Caco-2 (cell line): ENCODE measurements at regions of chr6 and their contacts with region 1.

Region 1: GRCh38 chr6:36851149-36851614 is 11.9 kb upstream of the CPNE5 start:
- DNase-seq: peak in 1 of 2 experiments; percentile 61
- H3K4me3 ChIP-seq: no peak overlapping the region
- H3K4me3 Mint-ChIP-seq: no peak overlapping the region
- H3K27ac Mint-ChIP-seq: no peak overlapping the region
- H3K4me1 ChIP-seq: no peaks in the 10 kb centered on the region
- H3K4me1 Mint-ChIP-seq: peaks cover 8% of the 10 kb centered on the region
- H3K27me3 ChIP-seq: no peaks in the 10 kb centered on the region
- H3K27me3 Mint-ChIP-seq: no peaks in the 10 kb centered on the region
- CTCF ChIP-seq: peak; percentile 79 to 82

Region 2: DNA sequence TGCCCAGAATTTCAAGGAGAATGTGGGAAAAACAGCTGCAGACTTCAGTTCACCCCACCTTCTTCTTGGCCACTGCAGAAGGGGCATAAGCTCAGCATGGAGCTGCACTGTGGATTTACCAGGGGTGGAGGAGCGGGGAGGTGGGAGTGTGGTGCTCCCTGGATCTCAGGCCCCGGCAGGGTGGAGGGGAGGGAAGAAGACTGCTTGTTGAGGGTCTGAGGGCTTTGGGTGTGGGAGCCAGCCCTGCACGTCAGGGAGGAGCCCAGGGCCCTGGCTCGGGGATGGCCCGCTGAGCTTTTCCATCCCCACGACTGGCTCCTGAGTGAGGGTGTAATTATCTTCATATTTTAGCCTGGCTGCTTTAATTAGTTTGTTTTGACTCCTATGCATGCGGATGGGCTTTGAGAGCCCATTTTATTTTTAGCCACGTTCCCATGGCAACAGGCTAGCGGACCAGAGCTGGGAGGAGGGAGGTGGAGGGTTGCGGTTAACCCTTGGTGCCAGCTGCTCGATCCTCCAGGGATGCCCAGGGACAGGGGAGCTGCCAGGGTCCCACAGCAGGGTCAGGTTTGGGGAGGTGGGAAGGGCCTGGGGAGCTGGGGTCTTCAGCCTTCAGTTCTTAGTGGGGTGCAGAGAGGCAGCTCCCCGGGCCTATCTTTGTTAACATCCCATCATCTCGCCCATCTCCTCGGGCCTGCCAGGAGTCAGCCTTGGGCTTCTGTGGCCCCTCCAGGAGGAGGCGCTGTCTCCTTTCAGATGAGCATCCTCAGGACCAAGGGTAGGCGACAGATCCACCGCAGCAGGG is 85.4 kb before region 1 on chr6:
- CTCF ChIA-PET with region 1: interaction called, 16 read pairs
- POLR2A ChIA-PET with region 1: no interaction called
- intact Hi-C with region 1: loop called (anchors 1 kb)
- DNase-seq: peak; percentile 77 to 85
- H3K4me3 ChIP-seq: no peak overlapping the region
- H3K4me3 Mint-ChIP-seq: no peak overlapping the region
- H3K27ac Mint-ChIP-seq: no peak overlapping the region
- H3K4me1 ChIP-seq: no peaks in the 10 kb centered on the region
- H3K4me1 Mint-ChIP-seq: no peaks in the 10 kb centered on the region
- H3K27me3 ChIP-seq: no peaks in the 10 kb centered on the region
- H3K27me3 Mint-ChIP-seq: no peaks in the 10 kb centered on the region
- CTCF ChIP-seq: peak; percentile 86 to 93

Region 3: DNA sequence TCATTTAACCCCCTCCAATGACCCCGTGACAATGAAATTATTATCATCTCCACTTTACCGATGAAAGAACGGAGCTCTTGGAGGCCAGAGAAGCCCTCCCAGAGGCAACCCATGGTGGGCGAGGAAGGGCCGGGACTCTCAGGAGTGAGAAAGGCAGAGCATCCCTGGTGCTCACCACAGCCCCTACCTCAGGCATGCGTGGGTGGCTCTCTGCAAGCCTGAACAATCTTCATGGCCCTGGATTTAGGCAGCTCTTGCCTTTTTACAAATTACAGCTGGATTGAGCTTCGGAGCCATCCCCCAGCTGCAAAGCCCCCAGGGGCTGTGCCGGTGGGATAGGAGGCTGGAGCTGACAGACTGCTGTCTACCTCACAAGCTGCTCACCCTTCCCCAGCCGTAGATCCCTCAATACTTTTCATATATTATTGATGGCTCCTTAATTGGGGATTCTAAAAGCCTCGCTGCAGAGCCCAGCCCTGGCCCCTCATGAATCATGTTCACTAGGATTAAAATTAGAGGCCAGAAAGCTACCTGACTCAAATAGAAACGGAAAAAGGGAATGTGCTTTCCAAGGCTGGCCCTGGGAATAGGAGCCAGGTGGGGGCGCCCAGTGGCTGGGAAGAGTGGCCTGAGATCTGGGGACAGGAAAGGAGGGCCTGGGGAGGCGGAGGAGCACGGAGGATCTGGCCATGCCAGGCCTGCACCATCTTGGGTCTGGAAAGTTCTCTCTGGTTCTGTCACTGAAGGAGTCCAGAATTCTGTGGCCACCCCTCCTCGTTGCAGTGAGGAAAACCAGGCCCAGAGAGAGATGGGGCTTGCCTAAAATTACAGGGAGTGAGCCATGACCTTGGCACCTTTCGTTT is 41.0 kb before region 1 on chr6:
- CTCF ChIA-PET with region 1: interaction called, 7 read pairs
- POLR2A ChIA-PET with region 1: no interaction called
- intact Hi-C with region 1: loop called (anchors 1 kb)
- DNase-seq: peak in 1 of 2 experiments; percentile 27
- H3K4me3 ChIP-seq: no peak overlapping the region
- H3K4me3 Mint-ChIP-seq: no peak overlapping the region
- H3K27ac Mint-ChIP-seq: no peak overlapping the region
- H3K4me1 ChIP-seq: no peaks in the 10 kb centered on the region
- H3K4me1 Mint-ChIP-seq: no peaks in the 10 kb centered on the region
- H3K27me3 ChIP-seq: no peaks in the 10 kb centered on the region
- H3K27me3 Mint-ChIP-seq: no peaks in the 10 kb centered on the region
- CTCF ChIP-seq: peak in 1 of 2 experiments; percentile 23

Region 4: GRCh38 chr6:36874443-36875249 is 23.5 kb after region 1 on chr6 and contains the start of gene PPIL1:
- CTCF ChIA-PET with region 1: interaction called, 15 read pairs
- POLR2A ChIA-PET with region 1: interaction called, 9 read pairs
- intact Hi-C with region 1: no loop called
- DNase-seq: peak; percentile 83 to 85
- H3K4me3 ChIP-seq: peak within 1 kb of the TSS; percentile 78
- H3K4me3 Mint-ChIP-seq: peak within 1 kb of the TSS; percentile 92
- H3K27ac Mint-ChIP-seq: peak within 1 kb of the TSS; percentile 98
- H3K4me1 ChIP-seq: 0 out of 2 replicates have a peak, but pooled peaks cover 5% of the 10 kb centered on the region
- H3K4me1 Mint-ChIP-seq: peaks cover 8% of the 10 kb centered on the region
- H3K27me3 ChIP-seq: no peaks in the 10 kb centered on the region
- H3K27me3 Mint-ChIP-seq: no peaks in the 10 kb centered on the region
- CTCF ChIP-seq: peak in 1 of 2 experiments; percentile 14
- total RNA-seq, gene PPIL1: 57.7 and 61.2 TPM in 2 replicates